CD4-positive, alpha-beta T cell (primary cell): ENCODE measurements at regions of chr4 and their contacts with region 1.

Region 1: GRCh38 chr4:157992038-157992705 is 180.7 kb downstream of the GASK1B start:
- DNase-seq: peak in 4 of 14 experiments; percentile 12 to 65 (median 58)
- ATAC-seq: no peak
- H3K4me3 ChIP-seq: peak overlapping the region; percentile 21
- H3K4me3 Mint-ChIP-seq: no peak overlapping the region
- H3K27ac ChIP-seq: no peak overlapping the region
- H3K27ac Mint-ChIP-seq: no peak overlapping the region
- H3K4me1 ChIP-seq: no peaks in the 10 kb centered on the region
- H3K4me1 Mint-ChIP-seq: no peaks in the 10 kb centered on the region
- H3K27me3 ChIP-seq: no peaks in the 10 kb centered on the region
- H3K27me3 Mint-ChIP-seq: no peaks in the 10 kb centered on the region
- CTCF ChIP-seq: peak; percentile 70

Region 2: DNA sequence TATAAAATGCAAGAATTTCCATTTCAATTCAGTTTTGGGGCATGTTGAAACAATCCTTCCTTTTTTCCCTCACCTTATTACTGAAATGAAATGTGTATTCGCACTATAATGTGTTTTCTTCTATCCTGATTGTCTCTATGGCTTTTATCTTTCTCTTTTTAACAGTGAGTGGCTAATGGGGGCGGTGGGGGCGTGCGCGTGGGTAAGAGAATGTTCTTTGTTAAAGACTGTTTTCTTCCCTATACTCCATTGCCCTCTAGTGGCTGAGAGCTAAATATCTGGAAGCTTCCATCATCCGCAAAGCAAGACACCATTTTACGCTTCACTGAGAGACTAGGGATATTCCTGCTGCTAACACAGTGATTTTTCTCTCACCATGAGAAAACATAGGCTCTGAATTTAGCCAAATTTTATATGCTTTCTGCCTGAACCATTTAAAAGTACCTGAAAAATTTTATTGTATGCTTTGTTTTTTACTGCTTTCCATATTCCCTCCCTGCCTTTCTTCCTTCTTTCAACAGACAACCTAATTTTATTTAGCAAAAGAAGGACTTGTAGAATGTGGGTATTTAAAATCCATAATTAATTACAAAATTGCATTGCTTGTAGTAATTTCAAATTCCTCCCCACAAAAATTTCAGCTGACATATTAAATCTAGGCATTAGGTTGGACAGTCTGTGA is 13.4 kb before region 1 on chr4:
- CTCF ChIA-PET with region 1: no interaction called
- POLR2A ChIA-PET with region 1: no interaction called
- intact Hi-C with region 1: no loop called
- DNase-seq: peak in 4 of 14 experiments; percentile 1 to 50 (median 44)
- ATAC-seq: no peak
- H3K4me3 ChIP-seq: no peak overlapping the region
- H3K4me3 Mint-ChIP-seq: no peak overlapping the region
- H3K27ac ChIP-seq: no peak overlapping the region
- H3K27ac Mint-ChIP-seq: no peak overlapping the region
- H3K4me1 ChIP-seq: no peaks in the 10 kb centered on the region
- H3K4me1 Mint-ChIP-seq: peaks cover 5% of the 10 kb centered on the region
- H3K27me3 ChIP-seq: no peaks in the 10 kb centered on the region
- H3K27me3 Mint-ChIP-seq: peaks cover 9% of the 10 kb centered on the region
- CTCF ChIP-seq: peak; percentile 71

Region 3: DNA sequence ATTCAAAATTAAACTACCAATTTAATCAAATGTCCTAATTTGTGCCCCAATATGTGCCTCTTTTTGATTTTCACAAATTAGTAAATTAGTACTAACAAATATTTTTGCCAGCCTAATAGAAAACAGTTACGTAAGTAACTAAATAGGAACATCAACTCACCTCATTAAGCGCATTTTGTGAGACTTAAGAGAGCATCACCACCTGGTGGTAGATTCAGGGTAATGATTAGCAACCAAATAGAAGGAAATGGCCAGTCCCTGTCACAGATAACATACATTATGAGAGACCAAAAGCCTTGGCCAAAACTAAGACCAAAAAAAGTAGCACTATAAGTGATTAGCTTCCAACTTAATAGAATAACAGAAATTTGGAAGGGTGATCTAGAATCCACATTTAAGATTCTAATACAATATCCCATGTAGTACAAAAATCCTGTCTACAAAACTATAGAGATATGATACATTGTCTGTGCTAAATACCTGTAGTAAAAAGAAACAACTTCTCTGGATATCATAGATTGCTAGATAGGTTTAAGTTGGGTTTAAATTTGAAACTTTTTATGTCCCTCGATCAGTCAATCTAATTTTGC is 632.8 kb after region 1 on chr4:
- CTCF ChIA-PET with region 1: no interaction called
- POLR2A ChIA-PET with region 1: no interaction called
- intact Hi-C with region 1: loop called in 1 of 2 experiments (anchors 10 kb)
- DNase-seq: peak in 3 of 14 experiments; percentile 22 to 48 (median 47)
- ATAC-seq: no peak
- H3K4me3 ChIP-seq: no peak overlapping the region
- H3K4me3 Mint-ChIP-seq: no peak overlapping the region
- H3K27ac ChIP-seq: no peak overlapping the region
- H3K27ac Mint-ChIP-seq: no peak overlapping the region
- H3K4me1 ChIP-seq: no peaks in the 10 kb centered on the region
- H3K4me1 Mint-ChIP-seq: no peaks in the 10 kb centered on the region
- H3K27me3 ChIP-seq: peaks cover 0 to 3% of the 10 kb centered on the region in 2 experiments
- H3K27me3 Mint-ChIP-seq: peaks cover 15% of the 10 kb centered on the region
- CTCF ChIP-seq: peak; percentile 61

Region 4: GRCh38 chr4:159206427-159206871 is 1214.3 kb after region 1 on chr4:
- CTCF ChIA-PET with region 1: no interaction called
- POLR2A ChIA-PET with region 1: no interaction called
- intact Hi-C with region 1: loop called in 1 of 2 experiments (anchors 10 kb)
- DNase-seq: peak in 4 of 14 experiments; percentile 10 to 26 (median 16)
- ATAC-seq: no peak
- H3K4me3 ChIP-seq: no peak overlapping the region
- H3K4me3 Mint-ChIP-seq: no peak overlapping the region
- H3K27ac ChIP-seq: no peak overlapping the region
- H3K27ac Mint-ChIP-seq: no peak overlapping the region
- H3K4me1 ChIP-seq: peaks cover 10% of the 10 kb centered on the region
- H3K4me1 Mint-ChIP-seq: peaks cover 23% of the 10 kb centered on the region
- H3K27me3 ChIP-seq: no peaks in the 10 kb centered on the region
- H3K27me3 Mint-ChIP-seq: no peaks in the 10 kb centered on the region
- CTCF ChIP-seq: no peak